Left colon (tissue), 2 donors: ENCODE measurements at regions of chr17 and their contacts with region 1.

Region 1: GRCh38 chr17:41648411-41649195 is 24.2 kb upstream of the KRT17 start:
- DNase-seq: peak; percentile 84 to 91
- ATAC-seq: peak; percentile 66

Region 2: DNA sequence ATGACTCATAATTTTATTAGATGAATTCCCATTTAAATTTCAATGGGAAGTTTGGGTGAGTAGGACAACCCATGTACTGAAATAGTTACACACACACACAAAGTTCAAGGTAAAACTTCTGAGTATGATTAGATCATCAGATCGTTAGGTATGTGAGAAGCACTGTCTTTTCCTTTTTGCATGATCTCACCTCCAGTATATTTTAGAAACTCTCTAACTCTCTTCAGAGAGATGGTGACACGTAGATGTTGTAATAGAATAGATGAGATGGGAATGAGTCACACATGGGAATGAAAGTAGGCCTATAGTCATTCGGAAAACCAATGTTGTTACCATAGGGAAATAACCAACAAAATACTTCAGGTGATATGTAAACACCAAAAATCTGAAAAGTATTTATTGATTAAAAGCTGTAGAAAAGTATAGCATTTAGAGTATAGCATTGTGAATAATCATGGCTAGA is 733.4 kb before region 1 on chr17:
- intact Hi-C with region 1: loop called in 1 of 2 experiments (anchors 10 kb)
- DNase-seq: no peak
- ATAC-seq: no peak

Region 3: DNA sequence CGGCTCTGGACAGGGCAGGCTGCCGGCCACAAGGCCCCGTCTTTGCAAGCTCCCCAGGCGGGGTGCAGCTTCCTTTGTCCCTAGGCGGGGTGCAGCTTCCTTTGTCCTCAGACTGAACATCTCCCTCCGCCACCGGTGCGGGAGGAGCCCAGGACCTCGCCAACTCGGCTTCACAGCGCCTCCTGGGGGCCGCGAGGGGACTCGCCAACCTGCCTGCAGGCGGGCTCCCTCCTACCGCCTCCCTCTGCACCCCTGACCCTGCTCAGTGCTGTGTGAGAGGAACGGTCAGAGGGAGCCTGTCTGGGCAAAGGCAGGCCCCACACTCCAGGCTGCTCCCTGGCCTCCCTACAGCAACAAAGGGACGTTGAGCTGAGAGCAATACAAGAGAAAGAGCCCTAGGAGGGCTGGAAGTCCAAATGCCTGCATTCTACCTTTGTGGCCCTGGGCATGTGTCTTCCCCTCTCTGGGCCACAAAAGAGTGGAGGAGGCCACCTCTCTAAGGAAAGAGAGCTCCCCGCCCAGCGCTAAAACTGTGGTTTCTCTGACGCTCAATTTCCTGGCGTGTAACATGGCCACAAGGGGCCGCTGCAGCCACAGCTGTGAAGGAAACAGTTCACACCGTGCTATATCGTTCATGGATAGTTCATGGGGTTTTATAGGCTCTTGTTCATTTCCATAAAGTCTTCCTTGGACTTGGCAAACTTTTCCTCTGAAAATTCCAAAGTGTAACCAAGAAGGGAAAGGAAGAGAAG is 99.6 kb before region 1 on chr17:
- intact Hi-C with region 1: loop called (anchors 5 to 10 kb)
- DNase-seq: peak; percentile 87 to 94
- ATAC-seq: peak; percentile 69

Region 4: GRCh38 chr17:41695954-41696756 is 47.6 kb after region 1 on chr17:
- intact Hi-C with region 1: no loop called
- DNase-seq: peak; percentile 39 to 54
- ATAC-seq: peak; percentile 35

Region 5: DNA sequence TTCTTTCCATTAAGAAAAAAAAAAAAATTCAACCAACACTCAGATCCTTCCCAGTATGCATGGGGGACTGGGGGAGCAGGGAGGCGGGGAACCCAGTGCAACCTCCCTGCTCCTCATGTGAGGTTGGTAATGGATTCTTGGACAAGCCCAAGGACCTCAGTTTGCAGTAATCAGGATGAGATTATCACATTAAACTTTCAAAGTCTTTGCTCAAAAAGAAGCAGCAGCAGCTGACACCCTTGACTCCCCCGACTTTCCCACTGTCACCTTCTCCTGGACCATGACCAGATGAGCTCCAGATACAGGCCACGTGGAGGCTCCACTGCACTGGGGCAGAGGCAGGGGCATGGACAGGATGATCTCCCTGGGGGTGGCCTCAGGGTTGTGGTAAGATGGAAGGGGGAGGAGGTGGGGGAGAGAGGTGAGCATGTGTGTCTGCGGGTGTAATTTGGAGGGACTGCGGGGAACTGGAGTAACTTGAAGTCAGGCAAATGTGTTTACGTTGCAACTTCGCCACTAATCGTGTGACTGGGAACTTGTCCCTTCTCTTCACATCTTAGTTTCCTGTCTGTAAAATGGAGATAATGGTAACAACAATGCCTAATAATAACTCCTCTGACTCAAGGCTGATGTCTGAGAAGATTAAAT is 429.9 kb after region 1 on chr17:
- intact Hi-C with region 1: no loop called
- DNase-seq: no peak
- ATAC-seq: no peak